ENCODE measurements at regions of chr4 and their contacts with region 1.

Region 1: DNA sequence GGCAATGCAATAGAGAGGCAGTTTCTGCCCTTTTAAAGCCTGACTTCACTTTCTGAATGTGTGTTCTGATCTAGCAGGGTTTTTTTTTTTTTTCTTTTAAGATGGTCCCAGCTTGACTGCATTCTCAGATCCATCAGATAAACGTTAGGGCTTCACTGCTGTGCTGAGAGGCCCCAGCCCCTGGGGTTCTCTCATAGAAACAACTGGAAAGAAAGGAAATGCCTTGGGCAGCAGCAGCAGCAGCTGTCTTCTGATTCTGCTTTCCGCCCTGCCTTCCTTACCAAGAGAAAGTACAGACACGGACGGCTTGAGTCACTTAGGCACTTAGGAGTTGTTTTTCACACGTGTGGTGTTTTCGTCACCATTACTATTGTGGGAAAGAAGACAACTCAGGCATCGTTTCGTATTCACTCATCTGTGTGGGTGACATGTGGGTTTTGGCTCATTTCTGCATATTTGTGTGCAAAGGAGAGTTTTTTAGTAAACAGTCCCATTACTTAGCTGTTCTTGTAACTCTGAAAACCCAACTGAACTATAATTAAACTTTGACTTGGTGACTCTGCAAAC is 172.0 kb downstream of the PTTG2 start:
- DNase-seq: no peak
- H3K4me3 ChIP-seq: no peak overlapping the region
- H3K4me3 Mint-ChIP-seq: no peak overlapping the region
- H3K27ac Mint-ChIP-seq: peak overlapping the region; percentile 1
- H3K4me1 ChIP-seq: peaks cover 40% of the 10 kb centered on the region
- H3K4me1 Mint-ChIP-seq: peaks cover 29% of the 10 kb centered on the region
- H3K27me3 ChIP-seq: no peaks in the 10 kb centered on the region
- H3K27me3 Mint-ChIP-seq: no peaks in the 10 kb centered on the region
- CTCF ChIP-seq: no peak

Region 2: DNA sequence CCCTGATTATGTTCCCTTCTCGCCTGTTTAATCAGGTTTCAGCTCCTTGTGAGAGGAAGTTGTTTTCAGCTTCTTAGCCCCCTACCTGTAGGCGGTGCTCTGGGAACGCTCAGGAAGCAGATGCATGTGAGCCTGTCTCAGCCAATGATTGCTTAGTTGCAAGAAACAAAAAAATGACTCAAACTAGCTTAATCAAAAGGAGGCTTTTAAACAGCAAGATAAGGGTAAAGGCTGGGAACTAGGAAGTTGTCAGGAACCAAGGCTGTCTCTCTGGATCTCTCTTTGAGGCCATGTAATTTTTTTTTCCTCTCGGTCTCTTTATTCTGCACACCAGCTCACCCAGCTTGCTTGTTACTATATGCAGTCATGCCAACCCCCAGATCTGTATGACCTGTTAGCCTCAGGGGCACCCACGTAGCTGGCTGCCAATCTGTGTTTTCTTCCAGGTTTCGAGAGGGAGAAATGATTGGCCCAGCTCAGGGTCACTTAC is 62.9 kb before region 1 on chr4:
- CTCF ChIA-PET with region 1: interaction called, 11 read pairs
- POLR2A ChIA-PET with region 1: no interaction called
- intact Hi-C with region 1: no loop called
- DNase-seq: peak; percentile 50 to 56
- H3K4me3 ChIP-seq: no peak overlapping the region
- H3K4me3 Mint-ChIP-seq: no peak overlapping the region
- H3K27ac Mint-ChIP-seq: peak overlapping the region; percentile 23
- H3K4me1 ChIP-seq: peaks cover 5% of the 10 kb centered on the region
- H3K4me1 Mint-ChIP-seq: no peaks in the 10 kb centered on the region
- H3K27me3 ChIP-seq: no peaks in the 10 kb centered on the region
- H3K27me3 Mint-ChIP-seq: no peaks in the 10 kb centered on the region
- CTCF ChIP-seq: peak; percentile 37 to 72

Region 3: GRCh38 chr4:38075370-38076152 is 56.6 kb before region 1 on chr4:
- CTCF ChIA-PET with region 1: no interaction called
- POLR2A ChIA-PET with region 1: no interaction called
- intact Hi-C with region 1: loop called (anchors 1 kb)
- DNase-seq: peak; percentile 46 to 69
- H3K4me3 ChIP-seq: no peak overlapping the region
- H3K4me3 Mint-ChIP-seq: no peak overlapping the region
- H3K27ac Mint-ChIP-seq: no peak overlapping the region
- H3K4me1 ChIP-seq: peaks cover 25% of the 10 kb centered on the region
- H3K4me1 Mint-ChIP-seq: peaks cover 20% of the 10 kb centered on the region
- H3K27me3 ChIP-seq: no peaks in the 10 kb centered on the region
- H3K27me3 Mint-ChIP-seq: no peaks in the 10 kb centered on the region
- CTCF ChIP-seq: no peak

Region 4: DNA sequence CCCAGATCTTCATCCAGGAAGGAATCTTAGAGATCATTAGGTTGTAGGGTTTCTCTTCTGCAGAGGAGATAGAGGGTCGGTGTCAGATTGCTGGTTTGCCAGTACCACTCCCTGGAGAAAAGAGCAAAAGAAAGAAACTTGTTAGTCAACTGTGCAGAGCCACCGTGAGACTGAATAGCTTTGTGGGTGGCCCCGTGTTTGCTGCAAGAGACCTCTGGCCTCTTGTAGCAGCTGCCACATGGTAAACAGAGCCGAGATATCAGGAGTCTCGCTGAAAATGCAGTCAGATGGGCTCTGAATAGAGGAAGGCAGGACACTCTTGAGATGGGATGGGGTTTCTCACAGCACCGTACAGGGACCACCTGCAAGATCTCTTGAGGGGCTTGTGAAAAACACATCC is 22.3 kb before region 1 on chr4:
- CTCF ChIA-PET with region 1: interaction called, 3 read pairs
- POLR2A ChIA-PET with region 1: no interaction called
- intact Hi-C with region 1: loop called (anchors 2 kb)
- DNase-seq: peak in 1 of 2 experiments; percentile 44
- H3K4me3 ChIP-seq: no peak overlapping the region
- H3K4me3 Mint-ChIP-seq: no peak overlapping the region
- H3K27ac Mint-ChIP-seq: peak overlapping the region; percentile 23
- H3K4me1 ChIP-seq: peaks cover 18% of the 10 kb centered on the region
- H3K4me1 Mint-ChIP-seq: peaks cover 30% of the 10 kb centered on the region
- H3K27me3 ChIP-seq: no peaks in the 10 kb centered on the region
- H3K27me3 Mint-ChIP-seq: no peaks in the 10 kb centered on the region
- CTCF ChIP-seq: no peak

Measured in Caco-2 (cell line).